ENCODE measurements at regions of chr11 and their contacts with region 1.

Region 1: GRCh38 chr11:61967116-61967923 is at the start of gene FTH1:
- DNase-seq: peak; percentile 93 to 96
- ATAC-seq: peak; percentile 80 to 87 (median 83)
- H3K4me3 ChIP-seq: peak within 1 kb of the TSS; percentile 86
- H3K27ac ChIP-seq: peak within 1 kb of the TSS; percentile 97
- H3K4me1 ChIP-seq: peaks cover 58% of the 10 kb centered on the region
- H3K27me3 ChIP-seq: no peaks in the 10 kb centered on the region
- CTCF ChIP-seq: no peak
- total RNA-seq, gene FTH1: 2,269 to 5,499 (median 3,297) TPM

Region 2: GRCh38 chr11:61891331-61892084 is 75.8 kb before region 1 on chr11 and contains the start of gene FADS3:
- intact Hi-C with region 1: loop called in 1 of 2 experiments (anchors 5 kb)
- DNase-seq: peak; percentile 92 to 94
- ATAC-seq: peak; percentile 77 to 88 (median 80)
- H3K4me3 ChIP-seq: peak within 1 kb of the TSS; percentile 91
- H3K27ac ChIP-seq: peak within 1 kb of the TSS; percentile 87
- H3K4me1 ChIP-seq: peaks cover 23% of the 10 kb centered on the region
- H3K27me3 ChIP-seq: no peaks in the 10 kb centered on the region
- CTCF ChIP-seq: no peak
- total RNA-seq, gene FADS3: 49.3 to 247 (median 57.9) TPM

Region 3: GRCh38 chr11:62069986-62070919 is 102.9 kb after region 1 on chr11:
- intact Hi-C with region 1: no loop called
- DNase-seq: no peak
- ATAC-seq: no peak
- H3K4me3 ChIP-seq: no peak overlapping the region
- H3K27ac ChIP-seq: no peak overlapping the region
- H3K4me1 ChIP-seq: no peaks in the 10 kb centered on the region
- H3K27me3 ChIP-seq: no peaks in the 10 kb centered on the region
- CTCF ChIP-seq: no peak

Region 4: DNA sequence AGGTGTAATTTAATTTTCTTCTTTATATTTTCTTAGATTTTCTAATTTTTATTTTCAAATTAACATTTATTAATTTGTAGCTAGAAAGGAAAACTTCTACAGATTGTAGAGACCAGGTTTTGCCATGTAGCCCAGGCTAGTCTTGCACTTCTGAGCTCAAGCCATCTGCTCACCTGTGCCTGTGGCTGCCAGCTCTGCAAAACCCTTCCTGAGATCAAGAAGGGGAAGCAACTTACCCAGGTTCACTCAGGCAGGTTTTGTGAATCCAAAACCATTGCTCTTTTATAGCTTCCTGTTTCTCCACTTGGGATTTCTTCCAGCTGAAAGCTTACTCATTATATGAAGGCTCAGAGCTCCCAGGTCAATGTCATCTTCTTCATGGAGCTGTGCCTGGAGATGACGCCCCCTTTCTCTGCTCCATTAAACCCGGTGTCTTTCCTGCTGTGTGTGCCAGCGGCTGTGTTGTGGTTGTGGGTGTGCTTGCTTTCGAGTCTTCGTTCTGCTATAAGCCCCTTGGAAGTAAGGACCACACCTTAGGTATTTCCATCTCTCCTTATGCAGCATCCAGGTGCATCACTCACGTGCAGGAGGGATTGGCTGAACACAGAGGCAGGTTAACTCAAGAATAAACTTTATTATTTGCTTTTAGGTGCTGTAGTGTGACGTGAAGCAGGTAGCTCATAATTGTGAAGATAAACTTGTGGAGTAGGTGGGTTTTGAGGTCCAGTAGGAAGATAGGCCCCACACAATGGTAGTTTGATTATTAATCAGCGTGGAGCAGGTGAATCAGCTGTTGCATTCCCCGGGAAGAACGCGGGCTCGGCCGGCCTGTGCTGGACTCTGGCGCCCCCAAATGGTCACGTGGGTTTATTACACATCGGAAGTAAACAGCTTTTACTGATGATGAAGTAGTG is 114.3 kb after region 1 on chr11:
- intact Hi-C with region 1: loop called in 1 of 2 experiments (anchors 5 kb)
- DNase-seq: peak; percentile 75 to 83
- ATAC-seq: peak; percentile 82 to 93 (median 89)
- H3K4me3 ChIP-seq: no peak overlapping the region
- H3K27ac ChIP-seq: no peak overlapping the region
- H3K4me1 ChIP-seq: peaks cover 3% of the 10 kb centered on the region
- H3K27me3 ChIP-seq: no peaks in the 10 kb centered on the region
- CTCF ChIP-seq: peak; percentile 90

Region 5: GRCh38 chr11:62591448-62592145 is 624.3 kb after region 1 on chr11 and contains the start of gene TUT1:
- intact Hi-C with region 1: loop called in 1 of 2 experiments (anchors 10 kb)
- DNase-seq: peak; percentile 94 to 97
- ATAC-seq: peak; percentile 93 to 95 (median 94)
- H3K4me3 ChIP-seq: peak within 1 kb of the TSS; percentile 95
- H3K27ac ChIP-seq: peak within 1 kb of the TSS; percentile 94
- H3K4me1 ChIP-seq: peaks cover 27% of the 10 kb centered on the region
- H3K27me3 ChIP-seq: no peaks in the 10 kb centered on the region
- CTCF ChIP-seq: no peak
- total RNA-seq, gene TUT1: 14.3 to 23.7 (median 19.6) TPM

Measured in psoas muscle (tissue), 8 donors.